ENCODE measurements at regions of chr2 and their contacts with region 1.

Region 1: DNA sequence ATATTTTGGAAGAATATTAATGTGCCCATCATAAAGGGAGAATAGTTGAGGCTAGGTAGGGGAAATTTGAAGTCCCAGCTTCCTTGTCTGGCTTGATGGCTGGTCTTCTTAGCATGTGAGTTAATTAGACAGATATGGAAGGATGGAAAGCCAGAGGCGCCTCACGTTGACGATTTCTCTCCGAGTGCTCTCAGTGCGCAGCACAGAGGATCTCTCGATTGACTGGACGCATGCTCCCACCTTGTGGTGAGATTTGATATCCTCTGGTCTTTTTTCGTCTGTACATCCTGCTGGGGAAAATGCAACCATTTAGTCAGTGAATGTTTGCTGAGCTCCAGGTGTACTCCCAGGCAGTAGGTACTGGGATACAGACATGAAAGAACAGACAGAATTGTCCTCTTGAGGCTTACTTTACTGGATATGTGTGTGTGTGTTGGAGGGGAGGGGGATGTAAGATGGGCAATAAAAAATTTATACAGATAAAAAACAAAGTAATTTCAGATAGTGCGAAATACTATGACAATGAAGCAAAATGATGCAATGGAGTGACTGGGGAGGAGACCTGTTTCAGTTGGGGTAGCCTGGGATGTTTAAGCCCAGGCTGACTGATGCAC is 66.9 kb upstream of the ZNG1B start:
- DNase-seq: peak; percentile 80
- H3K4me3 Mint-ChIP-seq: no peak overlapping the region
- H3K27ac Mint-ChIP-seq: no peak overlapping the region
- H3K4me1 Mint-ChIP-seq: peaks cover 4% of the 10 kb centered on the region
- H3K27me3 Mint-ChIP-seq: peaks cover 5% of the 10 kb centered on the region

Region 2: GRCh38 chr2:113298176-113298575 is 72.4 kb before region 1 on chr2:
- CTCF ChIA-PET with region 1: interaction called, 11 read pairs
- POLR2A ChIA-PET with region 1: no interaction called
- intact Hi-C with region 1: loop called (anchors 5 kb)
- DNase-seq: no peak
- H3K4me3 Mint-ChIP-seq: no peak overlapping the region
- H3K27ac Mint-ChIP-seq: no peak overlapping the region
- H3K4me1 Mint-ChIP-seq: no peaks in the 10 kb centered on the region
- H3K27me3 Mint-ChIP-seq: no peaks in the 10 kb centered on the region

Region 3: GRCh38 chr2:113342650-113343049 is 27.9 kb before region 1 on chr2:
- CTCF ChIA-PET with region 1: no interaction called
- POLR2A ChIA-PET with region 1: no interaction called
- intact Hi-C with region 1: no loop called
- DNase-seq: no peak
- H3K4me3 Mint-ChIP-seq: no peak overlapping the region
- H3K27ac Mint-ChIP-seq: no peak overlapping the region
- H3K4me1 Mint-ChIP-seq: peaks cover 4% of the 10 kb centered on the region
- H3K27me3 Mint-ChIP-seq: peaks cover 21% of the 10 kb centered on the region

Measured in activated CD4-positive, alpha-beta memory T cell treated with anti-CD3 and anti-CD28 coated beads for 36 hours (primary cell).